AG04449 (cell line): ENCODE measurements at regions of chr6 and their contacts with region 1.

Region 1: GRCh38 chr6:36360241-36361054 is 23.8 kb upstream of the BNIP5 start:
- DNase-seq: no peak
- H3K4me3 ChIP-seq: no peak overlapping the region
- CTCF ChIP-seq: peak; percentile 82

Region 2: DNA sequence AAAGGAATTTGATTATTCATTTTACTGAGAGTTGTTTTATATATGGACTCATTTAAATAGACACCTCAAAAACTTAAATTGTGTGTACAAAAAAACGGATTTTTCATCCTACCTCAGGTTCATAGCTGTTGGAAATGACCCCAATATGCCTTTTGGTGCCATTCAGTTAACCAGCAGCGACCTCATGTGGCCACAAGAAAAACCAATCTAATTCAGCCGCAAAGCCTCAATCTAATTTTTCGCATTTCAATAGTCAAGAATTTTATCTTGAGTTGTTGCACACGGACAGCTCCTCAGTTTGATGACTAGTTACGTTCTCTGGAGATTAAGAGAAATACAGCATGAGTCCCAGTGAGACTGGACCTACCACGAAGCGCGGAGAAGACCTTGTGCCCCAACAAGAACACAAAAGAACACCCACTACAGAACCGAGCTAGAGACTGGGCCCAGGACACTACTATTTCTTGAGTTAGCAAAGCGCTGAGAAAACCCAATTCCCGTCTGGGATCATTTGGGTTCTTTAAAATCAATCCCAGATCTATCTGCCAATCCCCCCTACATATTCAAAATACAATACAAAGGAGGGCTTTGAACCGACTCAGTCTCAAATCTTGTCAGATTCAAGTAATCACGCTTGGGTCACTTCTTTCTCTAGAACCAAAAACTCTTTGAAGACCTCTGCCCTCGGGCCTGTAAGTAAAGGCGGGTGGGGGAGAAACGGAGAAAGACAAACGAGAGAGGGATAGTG is 1220.4 kb before region 1 on chr6:
- CTCF ChIA-PET with region 1: no interaction called
- POLR2A ChIA-PET with region 1: no interaction called
- DNase-seq: peak; percentile 41
- H3K4me3 ChIP-seq: no peak overlapping the region
- CTCF ChIP-seq: peak; percentile 58

Region 3: GRCh38 chr6:36123257-36124139 is 236.9 kb before region 1 on chr6:
- CTCF ChIA-PET with region 1: interaction called, 16 read pairs
- POLR2A ChIA-PET with region 1: no interaction called
- DNase-seq: no peak
- H3K4me3 ChIP-seq: no peak overlapping the region
- CTCF ChIP-seq: peak; percentile 91

Region 4: DNA sequence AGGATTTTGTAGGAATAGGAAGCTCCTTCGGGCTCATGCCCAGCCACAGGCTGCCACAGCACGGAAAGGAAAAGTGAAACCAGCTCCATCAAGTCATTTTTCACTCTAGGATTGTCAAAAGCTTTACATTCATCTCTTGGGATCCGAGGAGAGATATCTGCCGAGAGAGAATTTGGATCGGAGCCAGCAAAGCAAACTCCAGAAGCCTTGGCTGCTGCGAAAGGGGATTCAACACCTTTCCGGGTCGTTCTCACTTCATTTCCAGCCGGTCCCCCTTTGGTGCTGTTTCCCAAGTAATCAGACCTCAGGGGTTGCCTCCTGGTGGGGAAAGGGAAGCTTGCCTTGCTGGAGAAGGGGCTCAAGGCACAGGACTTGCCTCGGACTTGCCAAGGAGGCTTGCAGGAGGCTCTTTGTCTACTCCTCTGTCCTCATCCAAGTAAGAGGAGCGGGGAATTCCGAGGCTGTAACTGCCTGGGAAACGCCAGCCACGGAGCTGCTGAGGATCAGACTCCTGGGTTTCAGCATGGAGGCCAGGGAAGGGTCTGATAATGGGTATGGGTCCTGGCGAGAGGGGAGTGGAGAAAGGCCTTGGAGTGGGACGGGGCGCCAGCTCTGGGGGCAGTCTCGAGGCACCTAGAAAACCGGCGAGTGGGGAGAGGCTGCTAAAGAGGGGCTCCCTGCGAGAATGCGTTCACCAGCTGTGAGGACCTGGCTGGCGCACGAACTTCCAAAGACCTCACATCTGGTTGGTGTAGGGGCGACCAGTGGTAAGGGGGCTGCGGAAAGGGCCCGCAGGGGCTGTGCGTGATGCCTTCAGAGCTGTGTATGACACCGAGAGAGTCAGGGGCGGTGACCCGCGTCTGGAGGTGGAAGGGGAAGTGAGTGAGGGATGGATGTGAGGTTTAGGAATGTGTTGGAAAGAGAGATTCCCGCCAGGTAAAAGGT is 26.3 kb after region 1 on chr6:
- CTCF ChIA-PET with region 1: interaction called, 21 read pairs
- POLR2A ChIA-PET with region 1: no interaction called
- DNase-seq: peak; percentile 24
- H3K4me3 ChIP-seq: peak overlapping the region; percentile 62
- CTCF ChIP-seq: peak; percentile 21